ENCODE measurements at regions of chr19 and their contacts with region 1.

Region 1: DNA sequence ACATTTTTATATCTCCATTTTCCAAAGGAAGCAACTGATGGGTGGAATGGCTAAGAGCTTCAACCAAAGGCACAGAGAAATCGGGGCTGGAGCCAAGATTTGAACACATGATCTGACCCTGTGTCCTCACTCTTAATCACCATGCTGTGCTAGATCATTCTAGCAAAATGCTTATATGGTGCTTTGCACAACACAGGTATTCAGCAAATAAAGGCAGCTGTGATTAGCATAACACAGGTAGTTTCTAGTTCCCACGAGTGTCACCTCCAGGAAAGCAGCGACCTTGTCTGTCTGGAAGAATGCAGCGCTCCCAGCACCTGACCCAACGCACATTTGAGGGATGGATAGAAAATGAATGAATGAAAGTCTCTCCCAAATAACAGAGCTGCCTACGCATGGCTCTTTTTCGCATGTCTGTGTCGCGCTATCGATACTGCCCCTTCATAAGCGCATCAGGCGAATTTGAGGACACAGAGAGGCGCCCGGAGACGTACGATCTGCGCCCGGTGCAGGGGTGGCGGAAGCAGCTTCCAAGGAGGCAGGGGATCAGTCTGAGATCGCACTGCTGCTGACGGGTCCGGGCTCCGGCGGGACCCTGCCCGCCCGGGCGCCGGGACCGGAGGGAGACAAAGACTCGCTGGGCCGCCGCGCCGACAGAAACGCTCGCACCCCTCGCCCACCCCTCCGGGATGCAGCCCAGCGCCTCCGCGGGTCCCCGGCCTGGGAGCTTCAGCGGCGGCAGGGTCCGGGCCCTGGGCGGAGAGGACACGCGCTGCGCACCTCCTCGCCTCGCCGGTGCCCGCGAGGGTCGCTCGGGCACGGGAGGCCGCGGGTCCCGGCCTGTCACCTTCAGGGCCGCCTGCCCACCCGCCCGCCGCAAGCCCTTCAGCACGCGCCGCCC is 609 bp downstream of the EPS15L1 start:
- DNase-seq: no peak
- H3K4me3 ChIP-seq: peak overlapping the region; percentile 82
- H3K27ac ChIP-seq: no peak overlapping the region
- H3K27me3 ChIP-seq: no peaks in the 10 kb centered on the region
- CTCF ChIP-seq: no peak

Region 2: GRCh38 chr19:16638666-16639065 is 167.5 kb after region 1 on chr19:
- CTCF ChIA-PET with region 1: no interaction called
- POLR2A ChIA-PET with region 1: interaction called, 12 read pairs
- DNase-seq: no peak
- H3K4me3 ChIP-seq: no peak overlapping the region
- H3K27ac ChIP-seq: no peak overlapping the region
- H3K27me3 ChIP-seq: no peaks in the 10 kb centered on the region
- CTCF ChIP-seq: no peak

Measured in AG04450 (cell line).